ENCODE measurements at regions of chr1 and their contacts with region 1.

Region 1: GRCh38 chr1:85200870-85201339 is at the start of gene SYDE2:
- DNase-seq: peak; percentile 69
- ATAC-seq: peak; percentile 81
- H3K4me3 Mint-ChIP-seq: peak within 1 kb of the TSS; percentile 92
- H3K27ac Mint-ChIP-seq: peak within 1 kb of the TSS; percentile 79
- H3K4me1 Mint-ChIP-seq: peaks cover 14% of the 10 kb centered on the region
- H3K27me3 Mint-ChIP-seq: peaks cover 26% of the 10 kb centered on the region
- CTCF ChIP-seq: no peak
- total RNA-seq, gene SYDE2: 0.38 and 0.64 TPM in 2 replicates

Region 2: DNA sequence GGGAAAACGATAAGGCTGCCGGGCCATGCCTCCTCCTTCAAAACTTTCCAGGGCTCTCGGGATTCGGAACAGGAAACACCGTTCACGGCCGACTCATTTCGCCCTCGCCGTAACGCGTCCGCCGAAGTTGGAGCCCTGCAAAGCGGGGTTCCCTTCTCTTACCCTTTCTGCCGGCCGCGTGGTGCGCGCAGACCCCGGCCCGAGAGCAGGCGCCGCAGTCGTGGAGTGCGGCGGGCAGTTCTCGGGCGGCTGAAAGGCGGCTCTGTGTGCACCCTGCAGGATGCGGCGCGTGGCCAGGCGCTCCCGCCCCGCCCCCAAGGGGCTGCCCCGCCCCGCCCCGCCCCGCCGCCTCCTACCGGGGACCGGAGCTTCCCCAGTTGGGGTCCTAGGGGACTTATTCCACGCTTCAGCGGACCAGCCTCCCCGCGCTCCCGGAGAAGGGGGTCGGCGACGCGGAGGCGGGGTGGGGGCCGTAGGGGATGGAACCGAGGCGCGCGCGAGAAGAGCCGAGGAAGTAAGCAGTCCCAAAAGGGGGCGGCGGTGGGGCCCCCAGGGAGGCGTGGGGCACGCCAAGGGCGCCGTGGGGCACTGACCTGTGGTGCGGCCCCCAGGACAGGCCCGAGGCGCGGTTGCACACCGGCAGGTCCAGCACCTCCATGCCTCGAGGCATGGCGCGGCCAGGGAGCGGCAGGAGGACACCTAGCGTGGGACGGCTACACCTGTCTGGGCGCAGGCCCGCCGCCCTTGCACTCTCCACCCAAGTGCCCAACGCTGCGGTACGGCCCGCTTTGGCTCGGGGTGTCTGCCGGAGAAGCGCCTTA is 203.8 kb before region 1 on chr1 and contains the start of gene MCOLN2:
- CTCF ChIA-PET with region 1: no interaction called
- POLR2A ChIA-PET with region 1: no interaction called
- intact Hi-C with region 1: loop called (anchors 1 kb)
- DNase-seq: peak; percentile 60
- ATAC-seq: peak; percentile 67
- H3K4me3 Mint-ChIP-seq: peak within 1 kb of the TSS; percentile 85
- H3K27ac Mint-ChIP-seq: peak within 1 kb of the TSS; percentile 87
- H3K4me1 Mint-ChIP-seq: peaks cover 63% of the 10 kb centered on the region
- H3K27me3 Mint-ChIP-seq: peaks cover 2% of the 10 kb centered on the region
- CTCF ChIP-seq: no peak
- total RNA-seq, gene MCOLN2: 60.1 and 80.2 TPM in 2 replicates

Region 3: GRCh38 chr1:85048296-85049064 is 152.4 kb before region 1 on chr1 and contains the start of gene MCOLN3:
- CTCF ChIA-PET with region 1: no interaction called
- POLR2A ChIA-PET with region 1: no interaction called
- intact Hi-C with region 1: loop called (anchors 5 kb)
- DNase-seq: peak; percentile 42
- ATAC-seq: peak; percentile 69
- H3K4me3 Mint-ChIP-seq: peak within 1 kb of the TSS; percentile 76
- H3K27ac Mint-ChIP-seq: no peak within 1 kb of the TSS
- H3K4me1 Mint-ChIP-seq: peaks cover 8% of the 10 kb centered on the region
- H3K27me3 Mint-ChIP-seq: peaks cover 41% of the 10 kb centered on the region
- CTCF ChIP-seq: no peak
- total RNA-seq, gene MCOLN3: 0.16 TPM in 1 of 2 replicates, not detected in the other

Region 4: DNA sequence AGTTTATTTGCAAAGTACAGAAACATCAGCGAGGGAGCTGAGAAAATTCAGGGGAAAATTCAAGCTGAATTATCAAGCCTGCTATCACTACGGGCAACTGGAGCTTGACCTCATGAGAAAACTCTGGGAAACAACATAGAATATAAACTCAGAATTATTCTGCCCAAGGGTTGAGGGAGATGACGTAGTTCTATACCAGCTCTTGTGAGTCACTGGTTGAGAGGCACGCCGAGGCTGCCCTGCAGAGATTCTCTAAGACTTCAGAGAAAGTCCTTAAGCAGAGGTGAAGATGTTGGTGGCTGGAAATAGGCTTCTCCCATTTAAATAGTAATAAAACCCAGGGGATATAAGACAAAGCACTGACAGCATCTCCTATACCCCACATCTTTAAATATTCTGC is 12.4 kb before region 1 on chr1:
- CTCF ChIA-PET with region 1: no interaction called
- POLR2A ChIA-PET with region 1: no interaction called
- intact Hi-C with region 1: no loop called
- DNase-seq: no peak
- ATAC-seq: no peak
- H3K4me3 Mint-ChIP-seq: no peak overlapping the region
- H3K27ac Mint-ChIP-seq: no peak overlapping the region
- H3K4me1 Mint-ChIP-seq: no peaks in the 10 kb centered on the region
- H3K27me3 Mint-ChIP-seq: peaks cover 9% of the 10 kb centered on the region
- CTCF ChIP-seq: no peak

Region 5: GRCh38 chr1:85259118-85259911 is 58.4 kb after region 1 on chr1 and contains the start of gene C1orf52:
- CTCF ChIA-PET with region 1: interaction called, 3 read pairs
- POLR2A ChIA-PET with region 1: no interaction called
- intact Hi-C with region 1: loop called (anchors 1 kb)
- DNase-seq: peak; percentile 99
- ATAC-seq: peak; percentile 96
- H3K4me3 Mint-ChIP-seq: peak within 1 kb of the TSS; percentile 98
- H3K27ac Mint-ChIP-seq: peak within 1 kb of the TSS; percentile 92
- H3K4me1 Mint-ChIP-seq: peaks cover 37% of the 10 kb centered on the region
- H3K27me3 Mint-ChIP-seq: no peaks in the 10 kb centered on the region
- CTCF ChIP-seq: peak; percentile 88
- total RNA-seq, gene C1orf52: 31.4 and 32.0 TPM in 2 replicates

Region 6: DNA sequence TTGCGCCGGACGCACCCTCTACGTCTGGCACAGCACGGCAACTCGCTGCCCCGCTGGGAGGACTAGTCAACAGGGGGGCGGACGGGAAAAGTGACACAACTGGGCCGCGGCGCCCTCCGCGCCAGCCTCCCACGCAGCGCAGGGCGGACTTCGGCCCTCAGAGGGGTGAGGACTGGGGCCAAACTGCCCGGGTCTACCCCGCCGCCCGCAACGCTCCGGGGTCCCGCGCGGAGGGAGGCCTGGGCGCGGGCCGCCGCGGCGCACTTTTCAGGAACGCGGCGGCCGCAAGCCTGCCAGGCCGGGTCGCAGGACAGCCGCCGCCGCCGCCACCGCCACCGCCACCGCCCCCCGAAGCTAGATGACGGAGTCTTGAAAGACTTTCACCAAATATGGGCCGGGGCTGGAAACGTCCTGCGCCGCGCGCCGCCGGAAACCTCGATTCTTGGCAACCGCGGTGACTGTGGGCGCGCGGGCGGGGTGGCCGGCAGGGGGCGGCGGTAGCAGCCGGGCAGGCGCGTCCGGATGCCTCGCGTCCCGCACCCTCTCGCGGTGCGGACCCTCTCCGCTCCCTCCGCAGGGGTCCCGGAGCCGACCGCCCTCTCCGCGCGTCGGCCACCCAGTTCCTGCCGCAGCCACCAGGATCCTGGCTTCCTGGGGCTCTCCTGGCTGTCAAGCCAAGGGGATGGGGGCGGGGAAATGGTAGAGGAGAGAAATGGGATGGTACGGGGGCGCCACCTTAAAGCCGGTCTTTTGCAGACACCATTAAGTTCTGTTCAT is 375.9 kb after region 1 on chr1:
- CTCF ChIA-PET with region 1: no interaction called
- POLR2A ChIA-PET with region 1: no interaction called
- intact Hi-C with region 1: loop called (anchors 10 kb)
- DNase-seq: peak; percentile 42
- ATAC-seq: peak; percentile 77
- H3K4me3 Mint-ChIP-seq: peak overlapping the region; percentile 74
- H3K27ac Mint-ChIP-seq: no peak overlapping the region
- H3K4me1 Mint-ChIP-seq: peaks cover 32% of the 10 kb centered on the region
- H3K27me3 Mint-ChIP-seq: peaks cover 62% of the 10 kb centered on the region
- CTCF ChIP-seq: no peak

Region 7: GRCh38 chr1:85707990-85708828 is 507.3 kb after region 1 on chr1 and contains the start of gene ZNHIT6:
- CTCF ChIA-PET with region 1: no interaction called
- POLR2A ChIA-PET with region 1: no interaction called
- intact Hi-C with region 1: loop called (anchors 1 kb)
- DNase-seq: peak; percentile 69
- ATAC-seq: peak; percentile 96
- H3K4me3 Mint-ChIP-seq: no peak within 1 kb of the TSS
- H3K27ac Mint-ChIP-seq: no peak within 1 kb of the TSS
- H3K4me1 Mint-ChIP-seq: peaks cover 24% of the 10 kb centered on the region
- H3K27me3 Mint-ChIP-seq: no peaks in the 10 kb centered on the region
- CTCF ChIP-seq: no peak
- total RNA-seq, gene ZNHIT6: 19.6 and 21.1 TPM in 2 replicates

Measured in activated B cell treated with CpG ODN at 0.5 μM for 24 hours (primary cell).